B cell (primary cell): ENCODE measurements at regions of chr12 and their contacts with region 1.

Region 1: GRCh38 chr12:101670007-101670687 is 27.3 kb upstream of the CHPT1 start:
- DNase-seq: peak; percentile 73
- ATAC-seq: peak; percentile 60
- H3K4me3 ChIP-seq: no peak overlapping the region
- H3K4me3 Mint-ChIP-seq: peak overlapping the region; percentile 14
- H3K27ac ChIP-seq: no peak overlapping the region
- H3K27ac Mint-ChIP-seq: peak overlapping the region; percentile 50
- H3K4me1 ChIP-seq: peaks cover 22 to 25% of the 10 kb centered on the region in 2 donors
- H3K4me1 Mint-ChIP-seq: peaks cover 22% of the 10 kb centered on the region
- H3K27me3 ChIP-seq: no peaks in the 10 kb centered on the region
- H3K27me3 Mint-ChIP-seq: peaks cover 7% of the 10 kb centered on the region
- CTCF ChIP-seq: peak; percentile 75

Region 2: GRCh38 chr12:101485021-101485420 is 185.1 kb before region 1 on chr12:
- CTCF ChIA-PET with region 1: no interaction called
- POLR2A ChIA-PET with region 1: no interaction called
- intact Hi-C with region 1: no loop called
- DNase-seq: no peak
- ATAC-seq: no peak
- H3K4me3 ChIP-seq: no peak overlapping the region
- H3K4me3 Mint-ChIP-seq: no peak overlapping the region
- H3K27ac ChIP-seq: no peak overlapping the region
- H3K27ac Mint-ChIP-seq: no peak overlapping the region
- H3K4me1 ChIP-seq: no peaks in the 10 kb centered on the region
- H3K4me1 Mint-ChIP-seq: no peaks in the 10 kb centered on the region
- H3K27me3 ChIP-seq: no peaks in the 10 kb centered on the region
- H3K27me3 Mint-ChIP-seq: peaks cover 4% of the 10 kb centered on the region
- CTCF ChIP-seq: no peak

Region 3: DNA sequence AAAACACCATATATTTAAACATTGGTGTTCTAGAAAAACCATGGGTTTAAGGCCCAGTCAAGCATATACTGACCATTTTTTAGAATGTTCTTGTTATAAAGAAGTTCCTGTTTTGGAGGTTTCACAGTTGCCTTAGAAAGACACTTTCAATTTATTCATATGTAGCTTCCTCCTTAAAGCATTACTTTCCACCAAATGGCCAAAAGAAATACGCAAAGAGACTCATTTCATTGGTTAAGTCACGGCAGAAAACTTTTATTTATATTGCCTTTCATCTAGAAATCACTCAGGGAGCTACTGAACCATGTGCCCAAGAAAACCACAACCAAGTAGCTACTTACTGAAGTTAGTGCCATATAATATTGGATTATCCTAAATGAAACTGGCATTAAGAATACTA is 35.4 kb before region 1 on chr12:
- CTCF ChIA-PET with region 1: no interaction called
- POLR2A ChIA-PET with region 1: no interaction called
- intact Hi-C with region 1: loop called (anchors 1 kb)
- DNase-seq: peak; percentile 81
- ATAC-seq: peak; percentile 94
- H3K4me3 ChIP-seq: peak overlapping the region; percentile 1 to 45 (median 29)
- H3K4me3 Mint-ChIP-seq: peak overlapping the region; percentile 78
- H3K27ac ChIP-seq: peak overlapping the region; percentile 77 to 86
- H3K27ac Mint-ChIP-seq: peak overlapping the region; percentile 92
- H3K4me1 ChIP-seq: peaks cover 33 to 34% of the 10 kb centered on the region in 2 donors
- H3K4me1 Mint-ChIP-seq: peaks cover 32% of the 10 kb centered on the region
- H3K27me3 ChIP-seq: no peaks in the 10 kb centered on the region
- H3K27me3 Mint-ChIP-seq: no peaks in the 10 kb centered on the region
- CTCF ChIP-seq: no peak

Region 4: GRCh38 chr12:101703487-101703886 is 33.3 kb after region 1 on chr12:
- CTCF ChIA-PET with region 1: no interaction called
- POLR2A ChIA-PET with region 1: no interaction called
- intact Hi-C with region 1: no loop called
- DNase-seq: no peak
- ATAC-seq: no peak
- H3K4me3 ChIP-seq: no peak overlapping the region
- H3K4me3 Mint-ChIP-seq: no peak overlapping the region
- H3K27ac ChIP-seq: no peak overlapping the region
- H3K27ac Mint-ChIP-seq: no peak overlapping the region
- H3K4me1 ChIP-seq: peaks cover 24 to 39% of the 10 kb centered on the region in 2 donors
- H3K4me1 Mint-ChIP-seq: peaks cover 67% of the 10 kb centered on the region
- H3K27me3 ChIP-seq: no peaks in the 10 kb centered on the region
- H3K27me3 Mint-ChIP-seq: no peaks in the 10 kb centered on the region
- CTCF ChIP-seq: no peak